Adrenal gland (tissue), 19 donors: ENCODE measurements at regions of chr17 and their contacts with region 1.

Region 1: GRCh38 chr17:31858642-31859473 is at the start of gene COPRS:
- DNase-seq: peak; percentile 91 to 94 (median 93)
- H3K4me3 ChIP-seq: peak within 1 kb of the TSS; percentile 48 to 88 (median 62)
- H3K27ac ChIP-seq: peak within 1 kb of the TSS in 4 of 5 donors; percentile 48 to 95 (median 80)
- H3K4me1 ChIP-seq: peaks cover 9 to 17% of the 10 kb centered on the region in 2 donors
- H3K27me3 ChIP-seq: no peaks in the 10 kb centered on the region
- CTCF ChIP-seq: no peak
- POLR2A ChIP-seq: peak; percentile 27 to 66
- total RNA-seq, gene COPRS: 40.4 to 126 (median 68.1) TPM

Region 2: GRCh38 chr17:31558748-31559644 is 299.9 kb before region 1 on chr17:
- intact Hi-C with region 1: loop called in 1 of 2 experiments (anchors 5 kb)
- DNase-seq: peak; percentile 77 to 85 (median 82)
- H3K4me3 ChIP-seq: peak overlapping the region in 3 of 4 donors; percentile 18 to 80 (median 24)
- H3K27ac ChIP-seq: peak overlapping the region in 4 of 5 donors; percentile 54 to 97 (median 79)
- H3K4me1 ChIP-seq: peaks cover 6 to 27% of the 10 kb centered on the region in 2 donors
- H3K27me3 ChIP-seq: no peaks in the 10 kb centered on the region
- CTCF ChIP-seq: peak in 5 of 6 experiments; percentile 28 to 91 (median 87)
- POLR2A ChIP-seq: peak in 1 of 2 donors; percentile 36